CD14-positive monocyte (primary cell): ENCODE measurements at regions of chr1 and their contacts with region 1.

Region 1: DNA sequence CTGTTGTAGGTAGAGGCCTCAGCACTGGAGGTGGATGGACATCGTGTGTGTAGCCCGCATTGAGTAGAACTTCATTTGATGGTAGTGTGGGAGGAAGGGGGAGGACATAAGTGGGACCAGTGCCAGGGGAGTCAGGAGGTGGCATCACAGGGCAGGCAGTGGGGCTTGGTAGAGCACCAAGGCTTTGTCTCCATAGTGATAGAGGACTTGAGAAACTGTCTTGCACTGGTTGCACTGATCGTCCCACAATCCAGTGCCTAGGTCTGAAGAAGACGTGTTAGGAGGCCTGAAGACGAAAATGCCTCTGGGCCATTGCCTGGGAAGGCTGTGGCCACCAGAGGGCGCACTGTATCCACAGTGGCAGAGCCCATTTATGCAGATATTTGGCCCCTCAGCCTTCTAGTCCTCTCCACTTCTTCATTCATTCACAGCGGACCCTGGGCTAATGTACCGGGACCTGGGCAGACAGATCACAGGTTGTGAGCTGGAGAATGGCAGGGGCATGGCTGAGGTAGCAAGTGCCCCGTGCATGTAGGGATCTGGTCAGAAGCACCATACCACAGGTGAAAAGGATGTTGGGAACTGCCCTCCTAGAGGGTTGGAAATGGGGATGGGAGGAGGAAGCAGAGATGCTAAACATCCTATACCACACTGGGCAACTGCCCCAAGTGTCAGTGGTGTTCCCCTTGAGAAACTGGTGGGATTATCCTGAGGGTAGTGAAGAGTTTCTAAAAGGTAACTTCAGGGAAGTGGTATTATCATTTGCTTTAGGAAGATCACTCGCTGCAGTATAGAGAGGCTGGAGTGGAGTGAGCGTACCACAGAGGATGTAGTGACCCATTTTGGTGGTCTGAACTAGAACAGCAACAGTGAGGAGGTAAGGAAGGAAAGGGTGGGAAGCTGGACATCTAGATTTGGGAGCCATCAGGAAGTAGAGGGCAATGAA is 95.3 kb downstream of the PIK3R3 start:
- DNase-seq: peak; percentile 68 to 79 (median 70)
- H3K4me3 ChIP-seq: no peak overlapping the region
- H3K4me3 Mint-ChIP-seq: no peak overlapping the region
- H3K27ac ChIP-seq: no peak overlapping the region
- H3K27ac Mint-ChIP-seq: no peak overlapping the region
- H3K4me1 ChIP-seq: peaks cover 11 to 14% of the 10 kb centered on the region in 2 donors
- H3K4me1 Mint-ChIP-seq: peaks cover 8% of the 10 kb centered on the region
- H3K27me3 ChIP-seq: no peaks in the 10 kb centered on the region
- H3K27me3 Mint-ChIP-seq: no peaks in the 10 kb centered on the region
- CTCF ChIP-seq: peak; percentile 97

Region 2: DNA sequence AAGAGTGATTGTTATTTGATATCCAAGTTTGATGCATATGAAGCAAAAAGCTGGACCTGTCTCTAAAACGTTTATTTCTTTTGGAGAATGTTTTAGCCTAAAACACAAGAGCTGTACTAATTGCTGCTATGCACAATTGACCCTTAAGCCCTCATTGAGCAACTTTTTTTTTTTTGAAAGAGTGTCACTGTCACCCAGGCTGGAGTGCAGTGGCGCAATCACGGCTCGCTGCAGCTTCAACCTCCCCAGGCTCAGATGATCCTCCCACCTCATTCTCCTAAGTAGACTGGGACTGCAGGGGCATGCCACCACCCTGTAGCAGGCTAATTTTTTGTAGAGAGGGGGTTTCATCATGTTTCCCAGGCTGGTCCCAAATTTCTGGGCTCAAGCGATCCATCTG is 33.9 kb before region 1 on chr1:
- intact Hi-C with region 1: no loop called
- DNase-seq: peak; percentile 27 to 38 (median 37)
- H3K4me3 ChIP-seq: peak overlapping the region in 2 of 3 experiments; percentile 28 to 60
- H3K4me3 Mint-ChIP-seq: peak overlapping the region; percentile 69 to 81
- H3K27ac ChIP-seq: peak overlapping the region; percentile 36 to 74
- H3K27ac Mint-ChIP-seq: peak overlapping the region; percentile 65 to 88 (median 81)
- H3K4me1 ChIP-seq: peaks cover 32 to 41% of the 10 kb centered on the region in 2 donors
- H3K4me1 Mint-ChIP-seq: peaks cover 46% of the 10 kb centered on the region
- H3K27me3 ChIP-seq: no peaks in the 10 kb centered on the region
- H3K27me3 Mint-ChIP-seq: no peaks in the 10 kb centered on the region
- CTCF ChIP-seq: no peak

Region 3: DNA sequence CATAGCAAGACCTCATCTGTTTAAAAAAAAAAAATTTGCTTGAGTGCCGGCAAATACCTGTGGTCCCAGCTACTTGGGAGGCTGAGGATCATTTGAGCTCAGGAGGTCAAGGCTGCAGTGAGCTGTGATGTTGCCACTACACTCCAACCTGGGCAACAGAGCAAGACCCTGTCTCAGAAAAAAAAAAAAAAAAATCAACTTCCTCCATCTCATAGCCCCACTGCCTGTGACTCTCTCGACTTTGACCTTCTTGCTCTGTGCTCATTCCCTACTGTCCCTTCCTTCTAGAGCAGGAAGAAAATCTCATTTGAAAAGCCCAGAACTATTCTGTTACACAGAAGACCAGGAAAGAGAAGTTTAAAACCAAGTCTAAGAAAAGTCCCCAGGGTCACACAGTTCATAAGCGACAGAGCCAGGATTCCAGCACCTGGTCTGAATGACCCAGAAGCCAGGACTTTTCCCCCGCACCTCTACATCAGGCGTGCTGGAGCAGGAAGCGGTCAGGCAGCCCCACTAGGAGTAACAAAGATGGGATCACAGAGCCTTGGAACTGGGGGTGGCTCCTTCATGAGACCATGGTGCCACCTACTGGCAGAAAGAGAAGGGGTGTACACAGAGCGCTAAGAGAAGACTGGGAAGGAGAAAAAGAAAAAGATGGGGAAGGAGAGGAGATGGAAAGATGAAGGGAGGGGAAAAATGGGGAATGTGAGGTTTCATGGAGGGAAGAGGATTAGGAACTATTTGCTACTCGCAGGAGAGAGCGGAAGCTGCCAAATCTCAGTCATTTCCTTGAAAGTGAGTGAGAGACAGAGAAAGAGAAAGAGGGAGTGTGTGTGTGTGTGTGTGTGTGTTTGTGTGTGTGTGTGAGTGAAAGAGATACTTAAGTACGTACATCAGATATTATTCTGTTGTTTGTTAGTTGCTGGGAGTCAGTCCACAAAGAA is 142.2 kb after region 1 on chr1:
- intact Hi-C with region 1: loop called (anchors 1 kb)
- DNase-seq: peak; percentile 53 to 64 (median 64)
- H3K4me3 ChIP-seq: no peak overlapping the region
- H3K4me3 Mint-ChIP-seq: no peak overlapping the region
- H3K27ac ChIP-seq: no peak overlapping the region
- H3K27ac Mint-ChIP-seq: no peak overlapping the region
- H3K4me1 ChIP-seq: peaks cover 5 to 12% of the 10 kb centered on the region in 2 donors
- H3K4me1 Mint-ChIP-seq: peaks cover 11% of the 10 kb centered on the region
- H3K27me3 ChIP-seq: no peaks in the 10 kb centered on the region
- H3K27me3 Mint-ChIP-seq: peaks cover 0 to 3% (median 2%) of the 10 kb centered on the region in 3 donors
- CTCF ChIP-seq: peak; percentile 88

Region 4: GRCh38 chr1:46224966-46225365 is 187.8 kb after region 1 on chr1:
- intact Hi-C with region 1: loop called in 1 of 2 experiments (anchors 2 kb)
- DNase-seq: no peak
- H3K4me3 ChIP-seq: no peak overlapping the region
- H3K4me3 Mint-ChIP-seq: no peak overlapping the region
- H3K27ac ChIP-seq: no peak overlapping the region
- H3K27ac Mint-ChIP-seq: peak overlapping the region in 1 of 7 donors; percentile 31
- H3K4me1 ChIP-seq: no peaks in the 10 kb centered on the region
- H3K4me1 Mint-ChIP-seq: peaks cover 2% of the 10 kb centered on the region
- H3K27me3 ChIP-seq: no peaks in the 10 kb centered on the region
- H3K27me3 Mint-ChIP-seq: peaks cover 0 to 3% (median 0%) of the 10 kb centered on the region in 3 donors
- CTCF ChIP-seq: no peak

Region 5: GRCh38 chr1:47809301-47810084 is 1772.3 kb after region 1 on chr1:
- intact Hi-C with region 1: no loop called
- DNase-seq: no peak
- H3K4me3 ChIP-seq: no peak overlapping the region
- H3K4me3 Mint-ChIP-seq: no peak overlapping the region
- H3K27ac ChIP-seq: no peak overlapping the region
- H3K27ac Mint-ChIP-seq: no peak overlapping the region
- H3K4me1 ChIP-seq: no peaks in the 10 kb centered on the region
- H3K4me1 Mint-ChIP-seq: no peaks in the 10 kb centered on the region
- H3K27me3 ChIP-seq: no peaks in the 10 kb centered on the region
- H3K27me3 Mint-ChIP-seq: peaks cover 3 to 8% (median 4%) of the 10 kb centered on the region in 3 donors
- CTCF ChIP-seq: no peak